Dendritic cell treated with granulocyte-macrophage colony-stimulating factor and Interleukin-4, amounts not matched to agents 40 ng/mL and 50 ng/mL, for 4 days (primary cell): ENCODE measurements at regions of chr11 and their contacts with region 1.

Region 1: GRCh38 chr11:10653926-10654810 is 39.4 kb downstream of the IRAG1 start:
- H3K4me3 Mint-ChIP-seq: no peak overlapping the region
- H3K27ac Mint-ChIP-seq: no peak overlapping the region
- H3K4me1 Mint-ChIP-seq: peaks cover 56% of the 10 kb centered on the region
- H3K27me3 Mint-ChIP-seq: peaks cover 18% of the 10 kb centered on the region

Region 2: GRCh38 chr11:10413268-10413667 is 240.9 kb before region 1 on chr11:
- intact Hi-C with region 1: loop called (anchors 2 kb)
- H3K4me3 Mint-ChIP-seq: no peak overlapping the region
- H3K27ac Mint-ChIP-seq: peak overlapping the region; percentile 78
- H3K4me1 Mint-ChIP-seq: peaks cover 63% of the 10 kb centered on the region
- H3K27me3 Mint-ChIP-seq: peaks cover 2% of the 10 kb centered on the region

Region 3: DNA sequence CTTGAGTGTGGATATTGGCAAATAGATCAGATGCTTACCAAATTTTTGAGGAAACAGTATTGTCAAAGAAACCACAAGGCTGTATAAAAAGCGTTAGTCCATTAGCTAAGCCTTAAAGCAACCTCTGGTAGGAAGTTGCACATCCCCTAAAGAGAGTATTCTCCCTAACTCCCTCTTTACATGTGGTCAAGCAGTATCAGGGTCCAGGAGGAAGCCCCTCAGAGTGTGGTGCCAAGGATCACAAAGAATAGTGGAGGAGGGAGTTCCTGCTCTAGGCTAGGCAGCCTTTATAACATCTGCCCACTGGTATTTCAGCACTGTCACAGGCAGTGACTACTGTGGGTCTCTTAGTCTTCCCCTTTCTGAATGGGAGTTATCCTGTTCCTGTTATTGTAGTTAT is 217.9 kb before region 1 on chr11:
- intact Hi-C with region 1: no loop called
- H3K4me3 Mint-ChIP-seq: no peak overlapping the region
- H3K27ac Mint-ChIP-seq: peak overlapping the region; percentile 88
- H3K4me1 Mint-ChIP-seq: peaks cover 24% of the 10 kb centered on the region
- H3K27me3 Mint-ChIP-seq: no peaks in the 10 kb centered on the region

Region 4: DNA sequence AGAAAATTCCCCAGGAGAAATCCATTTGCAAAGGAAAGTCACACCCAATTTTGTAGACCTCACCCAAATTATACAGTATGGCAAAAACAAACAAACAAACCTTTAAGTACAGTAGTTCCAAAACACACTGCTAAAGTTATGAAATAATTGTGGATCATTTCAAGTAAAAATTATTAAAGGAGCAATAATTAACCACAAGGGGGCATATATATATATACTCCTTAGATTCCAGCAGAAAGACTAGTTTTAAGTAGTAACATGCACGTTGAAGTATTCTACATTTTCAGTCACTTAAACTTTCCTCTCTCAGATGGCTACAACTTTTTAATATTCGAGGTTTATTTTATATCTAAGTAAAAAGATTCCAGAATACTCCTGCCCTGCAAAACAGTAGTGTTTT is 140.0 kb before region 1 on chr11:
- intact Hi-C with region 1: loop called (anchors 1 kb)
- H3K4me3 Mint-ChIP-seq: no peak overlapping the region
- H3K27ac Mint-ChIP-seq: no peak overlapping the region
- H3K4me1 Mint-ChIP-seq: no peaks in the 10 kb centered on the region
- H3K27me3 Mint-ChIP-seq: no peaks in the 10 kb centered on the region

Region 5: DNA sequence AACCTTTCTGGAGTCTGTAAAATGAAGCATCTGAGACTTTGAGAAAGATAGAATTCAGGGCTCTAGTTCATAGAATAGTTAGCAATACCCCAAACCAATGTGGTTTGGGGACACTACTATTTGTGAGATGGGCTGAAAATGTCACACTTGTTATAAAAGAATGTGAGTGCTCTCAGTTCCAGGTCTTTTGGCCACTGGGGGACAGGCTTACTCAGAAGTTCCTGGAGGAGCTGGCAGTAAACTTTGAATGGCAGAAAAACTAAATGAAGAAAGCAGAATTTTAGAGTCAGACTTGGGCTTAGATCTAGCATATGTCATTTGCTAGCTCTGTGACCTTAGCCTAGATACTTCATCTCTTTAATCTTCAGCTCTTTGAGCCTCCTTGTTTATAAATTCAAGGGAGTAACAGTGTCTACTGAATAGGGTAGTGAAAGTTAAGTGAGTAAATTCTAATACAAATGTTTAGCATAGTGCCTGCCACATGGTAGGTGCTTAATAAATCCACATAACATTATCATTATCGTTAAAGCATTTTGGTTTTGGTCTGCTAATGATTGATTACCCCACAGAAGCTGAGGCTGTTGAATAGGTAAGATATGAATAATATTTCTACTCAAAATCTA is 89.4 kb before region 1 on chr11:
- intact Hi-C with region 1: loop called (anchors 10 kb)
- H3K4me3 Mint-ChIP-seq: no peak overlapping the region
- H3K27ac Mint-ChIP-seq: no peak overlapping the region
- H3K4me1 Mint-ChIP-seq: peaks cover 33% of the 10 kb centered on the region
- H3K27me3 Mint-ChIP-seq: peaks cover 2% of the 10 kb centered on the region

Region 6: DNA sequence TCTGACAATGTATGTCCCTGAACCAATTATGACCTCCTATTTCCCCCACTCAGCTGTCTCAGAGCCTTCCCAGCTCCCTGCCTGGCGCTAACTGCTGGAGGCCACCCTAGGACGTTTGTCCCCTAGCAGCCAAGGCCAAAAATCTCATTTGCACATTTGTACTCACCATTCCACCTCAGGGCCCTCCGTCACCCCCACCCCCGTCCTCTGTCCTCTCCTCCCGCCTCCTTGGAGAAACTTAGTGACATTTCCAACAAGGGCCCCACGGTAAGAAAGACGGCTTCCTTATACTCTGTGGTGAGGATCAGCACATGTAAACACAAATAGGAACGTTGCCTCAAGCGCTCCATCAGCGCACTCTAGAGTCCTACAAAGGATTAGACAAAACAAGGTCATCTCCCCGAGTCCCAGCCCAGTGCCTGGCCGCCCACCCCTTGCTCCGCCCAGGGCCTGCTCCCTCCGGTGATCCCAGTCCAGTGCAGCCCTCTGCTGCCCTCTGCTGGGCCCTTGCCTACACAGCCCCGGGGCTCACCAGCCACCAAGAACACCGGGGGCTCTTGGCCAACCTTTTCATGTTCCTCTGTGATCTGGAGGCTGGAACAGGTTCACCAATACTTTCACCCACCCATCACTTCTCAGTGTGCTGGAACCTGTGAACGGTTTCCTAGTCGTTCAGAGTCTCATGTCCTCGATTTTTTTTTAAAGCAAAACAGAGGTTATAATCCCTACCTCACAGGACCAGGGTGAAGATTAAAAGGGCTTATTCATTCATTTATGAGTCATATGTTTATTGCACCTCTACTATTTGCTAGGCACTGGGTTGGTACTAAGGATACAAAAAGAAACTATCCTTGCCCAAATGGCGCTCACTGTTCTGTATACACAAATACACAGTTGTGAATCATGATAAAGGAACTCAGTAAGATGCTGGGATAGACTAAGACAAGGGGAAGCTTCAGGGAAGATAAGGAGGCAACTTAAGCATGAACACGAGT is 81.6 kb after region 1 on chr11:
- intact Hi-C with region 1: loop called (anchors 10 kb)
- H3K4me3 Mint-ChIP-seq: no peak overlapping the region
- H3K27ac Mint-ChIP-seq: peak overlapping the region; percentile 19
- H3K4me1 Mint-ChIP-seq: peaks cover 16% of the 10 kb centered on the region
- H3K27me3 Mint-ChIP-seq: peaks cover 25% of the 10 kb centered on the region